ENCODE measurements at regions of chr12 and their contacts with region 1.

Region 1: DNA sequence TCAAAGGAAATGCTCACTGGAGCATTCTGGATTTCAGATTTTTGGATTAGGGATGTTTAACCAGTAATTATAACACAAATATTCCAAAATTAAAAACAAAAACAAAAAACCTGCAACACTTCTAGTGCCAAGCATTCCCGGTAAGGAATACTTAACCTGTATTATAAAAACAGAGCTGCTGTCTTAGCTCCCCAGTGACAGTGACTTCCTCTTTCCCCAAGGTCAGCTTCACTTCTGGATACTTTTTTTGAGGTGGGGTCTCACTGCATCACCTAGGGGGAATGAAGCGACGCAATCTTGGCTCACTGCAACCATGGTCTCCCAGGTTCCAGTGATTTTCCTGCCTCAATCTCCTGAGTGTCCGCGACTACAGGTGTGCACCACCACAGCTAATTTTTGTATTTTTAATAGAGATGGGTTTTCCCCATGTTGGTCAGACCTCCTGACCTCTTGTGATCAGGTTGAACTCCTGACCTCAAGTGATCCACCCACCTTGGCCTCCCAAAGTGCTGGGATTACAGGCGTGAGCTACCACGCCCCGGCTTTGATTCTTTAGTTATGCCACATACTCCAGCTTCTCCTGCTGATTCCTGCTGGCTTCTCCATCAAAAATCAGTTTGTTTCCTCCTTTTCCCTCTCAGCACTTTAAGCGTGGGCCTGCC is 15.9 kb downstream of the PPP1CC start:
- DNase-seq: no peak
- ATAC-seq: no peak
- H3K4me3 Mint-ChIP-seq: no peak overlapping the region
- H3K27ac Mint-ChIP-seq: peak overlapping the region; percentile 86
- H3K4me1 Mint-ChIP-seq: peaks cover 54% of the 10 kb centered on the region
- H3K27me3 Mint-ChIP-seq: no peaks in the 10 kb centered on the region

Region 2: DNA sequence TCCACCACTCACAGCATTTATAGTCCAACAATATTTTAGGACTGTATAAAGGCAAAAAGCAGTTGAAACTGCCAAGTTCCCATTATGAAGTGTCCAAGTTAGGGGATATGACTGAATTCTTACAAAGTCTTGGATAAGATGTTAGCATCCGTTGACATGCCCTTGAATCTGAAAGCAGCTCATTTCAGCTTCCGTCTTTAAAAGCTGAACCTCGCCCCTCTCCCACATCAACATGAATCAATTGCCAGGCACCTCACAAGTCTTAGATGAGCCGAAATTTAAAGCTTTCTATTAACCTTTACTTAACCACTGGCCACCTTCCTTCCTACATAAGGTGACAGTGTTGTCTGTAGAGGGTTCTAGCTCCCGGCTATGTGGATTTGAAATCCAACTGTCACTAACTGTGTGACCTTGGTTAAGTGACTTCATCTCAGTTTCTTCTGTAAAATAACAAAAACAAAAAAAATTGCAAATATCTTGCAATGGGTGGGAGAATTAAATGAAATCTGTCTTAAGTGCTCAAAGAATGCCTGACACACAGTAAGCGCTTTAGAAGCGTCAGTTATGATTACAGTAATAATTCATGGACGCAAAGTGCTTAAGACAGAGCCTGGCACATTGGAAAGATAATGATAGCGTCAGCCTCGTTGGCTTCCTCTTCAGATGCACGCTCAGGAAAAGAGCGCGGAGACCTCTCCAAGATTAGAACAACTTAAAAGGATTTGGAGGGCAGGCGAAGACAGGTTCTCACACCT is 14.7 kb after region 1 on chr12:
- CTCF ChIA-PET with region 1: interaction called, 12 read pairs
- DNase-seq: peak; percentile 58
- ATAC-seq: no peak
- H3K4me3 Mint-ChIP-seq: peak overlapping the region; percentile 99
- H3K27ac Mint-ChIP-seq: peak overlapping the region; percentile 99
- H3K4me1 Mint-ChIP-seq: peaks cover 50% of the 10 kb centered on the region
- H3K27me3 Mint-ChIP-seq: no peaks in the 10 kb centered on the region

Region 3: GRCh38 chr12:110853836-110854235 is 127.0 kb after region 1 on chr12:
- CTCF ChIA-PET with region 1: no interaction called
- DNase-seq: no peak
- ATAC-seq: no peak
- H3K4me3 Mint-ChIP-seq: no peak overlapping the region
- H3K27ac Mint-ChIP-seq: no peak overlapping the region
- H3K4me1 Mint-ChIP-seq: peaks cover 3% of the 10 kb centered on the region
- H3K27me3 Mint-ChIP-seq: peaks cover 14% of the 10 kb centered on the region

Measured in activated CD8-positive, alpha-beta memory T cell treated with anti-CD3 and anti-CD28 coated beads, Interleukin-2, amount 10 ng/mL, durations not matched to agents 7 days and 5 days (primary cell).